Naive thymus-derived CD4-positive, alpha-beta T cell (primary cell): ENCODE measurements at regions of chr1 and their contacts with region 1.

Region 1: GRCh38 chr1:29181413-29182225 is at the start of gene SRSF4:
- DNase-seq: peak; percentile 96 to 99 (median 99)
- ATAC-seq: peak; percentile 97
- H3K4me3 ChIP-seq: peak within 1 kb of the TSS; percentile 99
- H3K4me3 Mint-ChIP-seq: peak within 1 kb of the TSS; percentile 88 to 98 (median 94)
- H3K27ac ChIP-seq: peak within 1 kb of the TSS; percentile 98
- H3K27ac Mint-ChIP-seq: peak within 1 kb of the TSS; percentile 88 to 98 (median 94)
- H3K4me1 ChIP-seq: peaks cover 26 to 29% of the 10 kb centered on the region in 2 donors
- H3K4me1 Mint-ChIP-seq: peaks cover 32 to 56% (median 50%) of the 10 kb centered on the region in 7 donors
- H3K27me3 ChIP-seq: no peaks in the 10 kb centered on the region
- H3K27me3 Mint-ChIP-seq: no peaks in the 10 kb centered on the region
- total RNA-seq, gene SRSF4: 77.6 to 110 (median 79.9) TPM

Region 2: DNA sequence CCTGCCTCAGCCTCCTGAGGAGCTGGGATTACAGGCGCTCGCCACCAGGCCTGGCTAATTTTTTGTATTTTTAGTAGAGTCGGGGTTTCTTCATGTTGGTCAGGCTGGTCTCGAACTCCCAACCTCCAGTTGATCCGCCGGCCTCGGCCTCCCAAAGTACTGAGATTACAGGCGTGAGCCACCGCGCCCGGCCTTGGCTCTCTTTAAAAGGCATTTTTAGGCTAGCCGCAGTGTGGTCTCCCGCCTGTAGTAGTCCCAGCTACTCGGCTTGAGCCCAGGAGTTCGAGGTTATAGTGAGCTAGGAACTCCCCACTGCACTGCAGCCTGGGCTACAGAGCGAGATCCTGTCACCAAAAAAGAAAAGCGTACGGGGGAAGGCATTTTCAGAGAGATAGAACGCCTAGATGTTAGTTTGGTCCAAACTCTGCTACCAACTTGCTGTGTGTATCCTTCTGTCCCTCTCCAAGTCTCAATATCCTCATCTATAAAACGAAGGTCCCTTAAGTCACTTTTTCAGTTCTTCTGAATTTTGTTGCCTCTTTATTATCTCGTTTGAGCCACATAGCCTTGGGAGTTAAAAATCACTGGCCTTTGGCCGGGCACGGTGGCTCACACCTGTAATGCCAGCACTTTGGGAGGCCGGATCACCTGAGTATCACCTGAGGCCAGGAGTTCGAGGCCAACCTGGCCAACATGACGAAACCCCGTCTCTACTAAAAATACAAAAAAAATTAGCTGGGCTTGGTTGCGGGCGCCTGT is 852.0 kb before region 1 on chr1:
- CTCF ChIA-PET with region 1: interaction called, 5 read pairs
- POLR2A ChIA-PET with region 1: interaction called, 10 read pairs
- intact Hi-C with region 1: loop called in 1 of 2 experiments (anchors 1 kb)
- DNase-seq: peak in 2 of 9 donors; percentile 32 to 48
- ATAC-seq: peak; percentile 14
- H3K4me3 ChIP-seq: peak overlapping the region; percentile 59
- H3K4me3 Mint-ChIP-seq: peak overlapping the region; percentile 89 to 98 (median 92)
- H3K27ac ChIP-seq: peak overlapping the region; percentile 86
- H3K27ac Mint-ChIP-seq: peak overlapping the region; percentile 92 to 100 (median 98)
- H3K4me1 ChIP-seq: peaks cover 13 to 14% of the 10 kb centered on the region in 2 donors
- H3K4me1 Mint-ChIP-seq: peaks cover 20 to 40% (median 39%) of the 10 kb centered on the region in 7 donors
- H3K27me3 ChIP-seq: no peaks in the 10 kb centered on the region
- H3K27me3 Mint-ChIP-seq: peaks cover 0 to 3% (median 0%) of the 10 kb centered on the region in 5 donors

Region 3: DNA sequence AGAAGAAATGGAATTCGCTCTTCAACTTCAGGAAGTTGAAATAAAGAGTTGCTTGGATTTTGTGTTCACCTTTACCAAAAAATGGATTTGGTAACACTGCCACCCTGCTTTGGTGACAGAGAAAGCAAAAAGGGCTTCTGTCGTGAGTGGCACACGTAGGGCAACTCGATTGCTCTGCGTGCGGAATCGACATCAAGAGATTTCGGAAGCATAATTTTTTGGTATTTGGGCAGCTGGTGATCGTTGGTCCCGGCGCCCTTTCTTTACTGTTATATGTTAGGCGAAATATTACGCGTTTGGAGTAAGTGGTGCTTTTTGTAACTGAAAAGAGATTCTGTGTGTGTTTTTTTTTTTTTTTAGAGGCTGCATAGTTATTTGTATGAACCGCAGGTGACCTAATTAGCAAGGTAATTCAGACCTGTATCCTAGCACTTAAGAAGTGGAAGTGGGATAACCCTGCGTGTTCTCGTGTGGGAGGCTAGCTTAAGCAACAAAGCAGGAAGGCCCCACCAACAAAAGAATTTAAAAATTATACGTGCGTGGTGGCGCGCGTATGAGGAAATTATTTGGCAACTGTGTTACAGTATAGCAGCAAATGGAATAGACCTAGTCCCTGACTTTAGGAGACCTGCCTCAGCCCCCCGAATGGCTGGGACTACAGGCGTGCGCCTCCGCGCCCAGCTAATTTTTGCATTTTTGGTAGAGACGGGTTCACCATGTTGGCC is 533.0 kb before region 1 on chr1 and contains the start of gene RNU11:
- CTCF ChIA-PET with region 1: no interaction called
- POLR2A ChIA-PET with region 1: interaction called, 21 read pairs
- intact Hi-C with region 1: loop called (anchors 1 kb)
- DNase-seq: peak in 8 of 9 donors; percentile 67 to 97 (median 91)
- ATAC-seq: peak; percentile 86
- H3K4me3 ChIP-seq: peak within 1 kb of the TSS; percentile 60
- H3K4me3 Mint-ChIP-seq: peak within 1 kb of the TSS; percentile 70 to 96 (median 90)
- H3K27ac ChIP-seq: peak within 1 kb of the TSS; percentile 93
- H3K27ac Mint-ChIP-seq: peak within 1 kb of the TSS; percentile 97 to 100 (median 99)
- H3K4me1 ChIP-seq: peaks cover 25 to 27% of the 10 kb centered on the region in 2 donors
- H3K4me1 Mint-ChIP-seq: peaks cover 14 to 39% (median 31%) of the 10 kb centered on the region in 7 donors
- H3K27me3 ChIP-seq: no peaks in the 10 kb centered on the region
- H3K27me3 Mint-ChIP-seq: no peaks in the 10 kb centered on the region
- total RNA-seq, gene RNU11: not detected

Region 4: GRCh38 chr1:28886731-28887418 is 294.7 kb before region 1 on chr1:
- CTCF ChIA-PET with region 1: interaction called, 3 read pairs
- POLR2A ChIA-PET with region 1: interaction called, 20 read pairs
- intact Hi-C with region 1: loop called (anchors 1 kb)
- DNase-seq: peak; percentile 87 to 97 (median 91)
- ATAC-seq: peak; percentile 83
- H3K4me3 ChIP-seq: peak overlapping the region; percentile 98
- H3K4me3 Mint-ChIP-seq: peak overlapping the region; percentile 70 to 95 (median 84)
- H3K27ac ChIP-seq: peak overlapping the region; percentile 79
- H3K27ac Mint-ChIP-seq: peak overlapping the region; percentile 81 to 98 (median 94)
- H3K4me1 ChIP-seq: peaks cover 32 to 36% of the 10 kb centered on the region in 2 donors
- H3K4me1 Mint-ChIP-seq: peaks cover 37 to 68% (median 50%) of the 10 kb centered on the region in 7 donors
- H3K27me3 ChIP-seq: no peaks in the 10 kb centered on the region
- H3K27me3 Mint-ChIP-seq: no peaks in the 10 kb centered on the region

Region 5: DNA sequence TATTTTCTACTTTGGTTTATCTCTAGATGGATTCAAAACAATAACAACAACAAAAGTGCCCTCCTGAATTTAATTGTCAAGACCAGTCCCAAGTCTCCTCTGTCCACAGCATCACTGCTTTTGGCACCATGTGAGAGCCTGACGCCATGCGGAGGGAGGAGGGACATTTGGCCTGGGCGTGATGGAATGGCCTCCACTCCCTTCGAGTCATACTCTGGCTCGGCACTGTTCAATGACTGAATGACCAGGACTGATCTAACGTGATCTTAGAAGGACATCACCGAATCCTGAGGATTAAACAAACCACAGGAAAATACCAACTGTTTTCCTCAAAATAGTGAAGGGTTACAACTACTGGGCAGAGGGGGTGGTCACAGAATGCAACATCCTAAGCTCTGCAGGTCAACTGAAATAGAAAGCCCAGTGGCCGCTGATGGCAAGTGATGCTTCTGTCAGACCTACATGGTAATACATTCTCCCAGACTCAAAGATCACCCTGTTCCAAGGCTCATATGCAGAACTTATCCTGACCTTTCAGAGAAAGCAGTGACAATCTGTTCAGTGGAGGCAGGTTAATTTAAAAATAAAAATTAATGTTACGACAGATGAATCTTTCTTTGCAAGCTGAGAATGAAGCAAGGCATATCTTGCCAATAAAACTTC is 19.0 kb before region 1 on chr1:
- CTCF ChIA-PET with region 1: no interaction called
- POLR2A ChIA-PET with region 1: interaction called, 14 read pairs
- intact Hi-C with region 1: loop called in 1 of 2 experiments (anchors 2 kb)
- DNase-seq: no peak
- ATAC-seq: no peak
- H3K4me3 ChIP-seq: no peak overlapping the region
- H3K4me3 Mint-ChIP-seq: no peak overlapping the region
- H3K27ac ChIP-seq: peak overlapping the region; percentile 24
- H3K27ac Mint-ChIP-seq: no peak overlapping the region
- H3K4me1 ChIP-seq: peaks cover 17 to 26% of the 10 kb centered on the region in 2 donors
- H3K4me1 Mint-ChIP-seq: peaks cover 19 to 59% (median 52%) of the 10 kb centered on the region in 7 donors
- H3K27me3 ChIP-seq: no peaks in the 10 kb centered on the region
- H3K27me3 Mint-ChIP-seq: no peaks in the 10 kb centered on the region

Region 6: DNA sequence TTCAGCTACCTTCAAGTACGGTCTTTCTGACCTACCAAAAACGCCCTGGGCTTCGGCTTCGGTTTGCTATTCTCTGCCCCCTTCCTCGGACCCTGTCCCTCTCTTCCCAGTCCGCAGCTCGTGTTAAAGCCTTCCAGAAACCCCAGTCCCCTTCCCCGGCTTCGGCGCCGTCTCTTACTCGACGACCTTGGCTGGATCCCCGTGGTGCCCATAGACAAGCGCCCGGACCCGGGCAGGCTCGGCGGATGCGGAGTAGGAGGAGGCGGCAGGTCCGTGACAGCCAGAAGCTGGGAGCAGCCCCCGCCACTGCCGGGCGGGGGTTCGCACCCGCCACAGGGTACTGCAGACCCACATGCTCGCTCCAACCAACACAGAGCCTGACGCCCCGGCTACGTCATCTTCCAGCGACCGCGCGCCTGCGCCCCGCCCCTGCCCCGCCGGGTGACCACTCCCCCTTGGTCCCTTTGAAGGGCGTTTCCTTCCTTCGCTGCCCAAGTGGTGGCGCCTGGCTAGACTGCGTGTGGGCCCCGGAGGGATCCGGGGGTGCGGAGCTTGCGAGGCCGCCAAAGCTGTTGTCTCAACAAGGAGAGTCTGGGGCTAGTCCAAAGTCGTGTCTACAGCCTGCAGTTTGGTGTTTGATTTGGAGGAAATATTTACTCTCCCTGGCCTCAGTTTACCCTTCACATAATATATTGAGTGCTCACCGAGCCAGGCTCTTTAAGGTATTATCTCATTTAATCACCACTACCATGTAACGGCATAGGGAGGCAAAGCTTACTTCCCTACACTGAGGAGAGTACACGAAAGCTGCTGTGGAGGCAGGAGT is 49.1 kb after region 1 on chr1 and contains the start of gene MECR:
- CTCF ChIA-PET with region 1: no interaction called
- POLR2A ChIA-PET with region 1: interaction called, 15 read pairs
- intact Hi-C with region 1: loop called (anchors 1 to 5 kb)
- DNase-seq: peak; percentile 89 to 98 (median 92)
- ATAC-seq: peak; percentile 100
- H3K4me3 ChIP-seq: peak within 1 kb of the TSS; percentile 65
- H3K4me3 Mint-ChIP-seq: peak within 1 kb of the TSS; percentile 87 to 97 (median 92)
- H3K27ac ChIP-seq: peak within 1 kb of the TSS; percentile 76
- H3K27ac Mint-ChIP-seq: peak within 1 kb of the TSS; percentile 80 to 97 (median 93)
- H3K4me1 ChIP-seq: peaks cover 7 to 13% of the 10 kb centered on the region in 2 donors
- H3K4me1 Mint-ChIP-seq: peaks cover 12 to 26% (median 21%) of the 10 kb centered on the region in 7 donors
- H3K27me3 ChIP-seq: peaks cover 0 to 1% of the 10 kb centered on the region in 2 donors
- H3K27me3 Mint-ChIP-seq: peaks cover 0 to 26% (median 11%) of the 10 kb centered on the region in 5 donors
- total RNA-seq, gene MECR: 8.6 to 24.4 (median 16.8) TPM